ENCODE measurements at regions of chr4 and their contacts with region 1.

Region 1: GRCh38 chr4:153634738-153635353 is 49.2 kb upstream of the TLR2 start:
- DNase-seq: no peak
- ATAC-seq: no peak

Region 2: DNA sequence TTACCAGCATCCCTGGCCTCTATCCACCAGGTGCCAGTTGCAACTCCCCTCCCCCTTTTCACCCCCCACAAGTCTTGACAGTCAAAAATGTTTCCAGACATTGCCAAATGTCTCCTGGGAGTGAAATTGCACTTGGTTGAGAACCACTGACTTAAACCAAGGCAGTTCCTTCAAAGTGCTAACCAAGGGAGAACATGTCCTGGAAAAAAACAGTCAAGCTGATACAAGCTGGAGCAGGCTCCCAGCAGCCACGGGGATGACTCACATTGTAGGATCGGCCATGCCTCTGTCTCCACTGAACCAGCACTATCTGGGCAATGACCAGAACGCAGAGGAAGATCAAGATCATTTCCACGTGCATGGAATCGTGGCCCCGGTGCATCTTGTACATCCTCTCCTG is 113.5 kb after region 1 on chr4:
- intact Hi-C with region 1: loop called (anchors 5 kb)
- DNase-seq: no peak
- ATAC-seq: peak; percentile 38